ENCODE measurements at regions of chr6 and their contacts with region 1.

Region 1: GRCh38 chr6:87701676-87702588 is at the start of gene AKIRIN2:
- H3K4me3 Mint-ChIP-seq: peak within 1 kb of the TSS; percentile 94
- H3K27ac Mint-ChIP-seq: peak within 1 kb of the TSS; percentile 97
- H3K4me1 Mint-ChIP-seq: peaks cover 22% of the 10 kb centered on the region
- H3K27me3 Mint-ChIP-seq: no peaks in the 10 kb centered on the region

Region 2: GRCh38 chr6:87472525-87473418 is 229.2 kb before region 1 on chr6 and contains the start of gene SLC35A1:
- intact Hi-C with region 1: loop called (anchors 10 kb)
- H3K4me3 Mint-ChIP-seq: peak within 1 kb of the TSS; percentile 94
- H3K27ac Mint-ChIP-seq: peak within 1 kb of the TSS; percentile 99
- H3K4me1 Mint-ChIP-seq: peaks cover 13% of the 10 kb centered on the region
- H3K27me3 Mint-ChIP-seq: no peaks in the 10 kb centered on the region

Region 3: DNA sequence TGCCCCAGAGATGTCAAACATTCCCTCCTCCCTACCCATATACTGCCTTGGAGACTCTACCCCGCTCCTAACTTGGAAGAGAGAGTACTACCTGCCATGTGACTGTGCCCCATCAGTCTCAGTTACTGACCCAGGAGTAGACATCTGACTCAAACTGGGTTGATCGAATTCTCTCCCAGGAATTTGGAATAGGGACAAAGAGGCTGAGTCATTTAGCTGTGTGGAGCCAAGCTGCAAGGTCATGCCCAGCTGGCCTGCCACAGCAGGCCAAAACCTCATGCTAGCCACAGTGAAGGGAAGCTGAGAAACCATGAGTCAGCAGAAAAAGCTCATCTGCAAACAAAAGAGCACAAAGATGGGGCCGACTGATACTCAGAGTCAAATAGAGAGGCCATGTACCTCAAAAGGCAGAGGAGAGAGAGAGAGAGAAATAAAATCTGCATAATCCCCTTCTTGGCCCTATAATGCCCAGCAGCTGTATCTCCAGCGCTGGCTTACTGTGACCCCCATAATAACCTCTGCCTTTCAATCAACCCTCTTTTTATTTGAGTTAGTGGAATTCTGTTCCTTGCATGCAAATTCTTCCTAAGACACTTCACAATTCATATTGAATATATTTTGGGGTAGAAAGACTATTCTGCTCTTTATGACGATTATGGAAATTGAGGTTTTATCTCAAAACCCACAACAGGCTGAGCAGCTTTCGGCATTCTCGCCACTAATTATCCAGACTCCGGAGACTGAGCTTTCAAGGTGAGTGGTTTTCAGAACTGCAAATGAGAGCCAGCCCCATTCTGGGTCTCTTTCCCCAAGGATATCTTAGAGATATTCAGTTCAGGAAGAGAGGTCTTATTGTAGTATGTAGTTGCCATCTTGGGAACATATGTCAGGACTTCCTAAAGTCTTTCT is 21.5 kb after region 1 on chr6:
- intact Hi-C with region 1: loop called (anchors 1 kb)
- H3K4me3 Mint-ChIP-seq: no peak overlapping the region
- H3K27ac Mint-ChIP-seq: peak overlapping the region; percentile 83
- H3K4me1 Mint-ChIP-seq: peaks cover 54% of the 10 kb centered on the region
- H3K27me3 Mint-ChIP-seq: no peaks in the 10 kb centered on the region

Region 4: GRCh38 chr6:87756858-87757257 is 54.9 kb after region 1 on chr6:
- intact Hi-C with region 1: loop called (anchors 2 kb)
- H3K4me3 Mint-ChIP-seq: no peak overlapping the region
- H3K27ac Mint-ChIP-seq: peak overlapping the region; percentile 82
- H3K4me1 Mint-ChIP-seq: peaks cover 51% of the 10 kb centered on the region
- H3K27me3 Mint-ChIP-seq: no peaks in the 10 kb centered on the region

Region 5: GRCh38 chr6:87929843-87930288 is 227.9 kb after region 1 on chr6:
- intact Hi-C with region 1: loop called (anchors 10 kb)
- H3K4me3 Mint-ChIP-seq: no peak overlapping the region
- H3K27ac Mint-ChIP-seq: no peak overlapping the region
- H3K4me1 Mint-ChIP-seq: no peaks in the 10 kb centered on the region
- H3K27me3 Mint-ChIP-seq: no peaks in the 10 kb centered on the region

Measured in dendritic cell treated with granulocyte-macrophage colony-stimulating factor and Interleukin-4, amounts not matched to agents 40 ng/mL and 50 ng/mL, for 4 days (primary cell).